ENCODE measurements at regions of chr9 and their contacts with region 1.

Region 1: DNA sequence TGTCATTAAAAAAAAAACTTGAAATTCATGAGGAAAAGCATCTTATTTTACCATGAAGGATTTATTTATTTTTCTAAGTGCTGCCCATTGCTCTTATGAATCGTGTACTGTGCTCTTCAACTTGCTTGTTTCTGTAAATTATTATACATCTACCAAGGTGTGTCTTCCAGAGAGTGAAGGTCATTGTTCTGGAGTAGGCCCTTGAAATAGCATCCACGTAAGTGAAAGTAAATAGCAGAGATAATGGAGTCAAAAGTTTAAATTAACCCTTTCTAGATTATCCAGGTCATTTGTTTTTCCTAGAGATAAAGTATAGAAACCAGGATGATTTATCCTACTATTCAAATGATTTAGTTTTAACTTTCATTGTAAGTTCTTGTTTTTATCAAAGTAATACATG is 473.1 kb downstream of the DIRAS2 start:
- DNase-seq: no peak
- H3K4me3 ChIP-seq: no peak overlapping the region
- H3K27ac ChIP-seq: peak overlapping the region; percentile 50 to 77 (median 72)
- H3K4me1 ChIP-seq: peaks cover 0 to 49% (median 25%) of the 10 kb centered on the region in 4 donors
- H3K27me3 ChIP-seq: no peaks in the 10 kb centered on the region
- CTCF ChIP-seq: no peak
- EP300 ChIP-seq: no peak
- POLR2A ChIP-seq: no peak

Region 2: DNA sequence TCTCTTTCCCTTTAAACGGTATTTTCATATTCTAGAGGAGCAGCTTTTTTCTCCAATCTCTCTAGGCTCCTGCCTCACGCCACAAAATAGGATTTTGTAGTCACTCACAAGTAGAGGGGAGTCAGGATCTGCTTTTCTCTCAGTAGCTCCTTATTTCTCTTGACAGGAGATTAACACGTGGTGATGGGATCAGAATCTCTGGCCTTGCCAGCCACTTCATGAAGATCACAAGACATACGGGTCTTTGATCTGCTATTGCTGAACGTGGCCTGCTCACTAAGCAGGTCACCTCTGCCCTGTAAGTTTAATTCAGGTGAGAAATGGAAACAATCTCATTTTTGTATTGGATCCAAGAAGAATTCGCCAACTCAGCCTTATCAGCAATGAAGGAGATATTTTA is 215.7 kb after region 1 on chr9:
- in situ Hi-C with region 1: no loop called
- intact Hi-C with region 1: no loop called
- DNase-seq: no peak
- H3K4me3 ChIP-seq: no peak overlapping the region
- H3K27ac ChIP-seq: no peak overlapping the region
- H3K4me1 ChIP-seq: no peaks in the 10 kb centered on the region
- H3K27me3 ChIP-seq: no peaks in the 10 kb centered on the region
- CTCF ChIP-seq: no peak
- EP300 ChIP-seq: no peak
- POLR2A ChIP-seq: no peak

Region 3: DNA sequence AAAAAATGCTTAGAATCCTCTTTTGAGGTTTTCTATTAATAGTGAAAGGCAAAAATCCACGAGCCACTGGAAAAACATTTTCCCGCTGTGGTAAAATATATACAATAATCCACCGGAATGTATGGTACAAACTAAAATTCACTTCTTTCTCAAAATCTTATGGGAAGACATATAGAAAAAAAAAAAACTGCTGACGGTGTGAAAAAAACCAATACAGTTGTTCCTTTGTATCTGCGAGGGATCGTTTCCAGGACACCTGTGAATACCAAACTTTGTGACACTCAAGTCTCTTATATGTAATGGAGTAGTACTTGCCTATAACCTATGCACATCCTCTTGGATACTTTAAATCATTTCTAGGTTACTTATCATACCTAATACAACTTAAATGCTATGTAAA is 459.9 kb after region 1 on chr9:
- in situ Hi-C with region 1: no loop called
- intact Hi-C with region 1: loop called (anchors 5 kb)
- DNase-seq: no peak
- H3K4me3 ChIP-seq: no peak overlapping the region
- H3K27ac ChIP-seq: no peak overlapping the region
- H3K4me1 ChIP-seq: no peaks in the 10 kb centered on the region
- H3K27me3 ChIP-seq: no peaks in the 10 kb centered on the region
- CTCF ChIP-seq: no peak
- EP300 ChIP-seq: no peak
- POLR2A ChIP-seq: no peak